ENCODE measurements at regions of chr15 and their contacts with region 1.

Region 1: DNA sequence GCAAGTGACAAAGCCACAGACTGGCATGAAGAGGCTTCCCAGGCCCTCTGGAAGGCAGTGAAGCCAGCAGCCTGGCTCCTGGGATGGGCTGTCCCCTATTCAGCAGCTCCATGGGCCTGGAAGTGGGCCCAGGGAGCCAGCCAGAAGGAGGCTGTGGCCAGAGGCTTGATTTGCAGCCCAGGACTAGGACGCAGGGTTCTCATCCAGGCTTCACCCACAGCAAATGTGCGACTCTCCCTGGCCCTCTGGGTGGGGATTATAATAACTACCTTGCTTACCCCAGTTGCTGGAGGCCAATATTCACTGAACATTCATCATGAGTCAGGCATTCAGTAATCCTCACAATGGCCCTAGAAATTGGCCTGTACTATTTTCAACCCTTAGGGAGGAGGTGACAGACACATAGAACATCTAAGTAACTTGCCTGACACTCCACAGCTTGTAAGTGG is 24.6 kb upstream of the SRP14 start:
- DNase-seq: no peak
- H3K4me3 ChIP-seq: no peak overlapping the region
- H3K27ac ChIP-seq: no peak overlapping the region
- H3K4me1 ChIP-seq: peaks cover 0 to 9% (median 0%) of the 10 kb centered on the region in 4 experiments; a peak in 3 of 7 replicates
- H3K27me3 ChIP-seq: peaks cover 0 to 2% (median 0%) of the 10 kb centered on the region in 4 experiments; a peak in 1 of 7 replicates
- CTCF ChIP-seq: no peak
- EP300 ChIP-seq: no peak
- POLR2A ChIP-seq: no peak
- RAD21 ChIP-seq: no peak

Region 2: GRCh38 chr15:39908186-39908585 is 155.4 kb before region 1 on chr15:
- CTCF ChIA-PET with region 1: no interaction called
- POLR2A ChIA-PET with region 1: no interaction called
- DNase-seq: no peak
- H3K4me3 ChIP-seq: no peak overlapping the region
- H3K27ac ChIP-seq: no peak overlapping the region
- H3K4me1 ChIP-seq: peaks cover 17 to 42% (median 40%) of the 10 kb centered on the region in 4 experiments
- H3K27me3 ChIP-seq: no peaks in the 10 kb centered on the region
- CTCF ChIP-seq: no peak
- EP300 ChIP-seq: no peak
- POLR2A ChIP-seq: no peak; a peak in 1 of 3 replicates
- RAD21 ChIP-seq: no peak

Region 3: GRCh38 chr15:40098489-40099261 is 35.1 kb after region 1 on chr15:
- CTCF ChIA-PET with region 1: interaction called, 65 read pairs
- POLR2A ChIA-PET with region 1: interaction called, 6 read pairs
- DNase-seq: no peak
- H3K4me3 ChIP-seq: no peak overlapping the region
- H3K27ac ChIP-seq: no peak overlapping the region
- H3K4me1 ChIP-seq: peaks cover 18 to 38% (median 29%) of the 10 kb centered on the region in 4 experiments
- H3K27me3 ChIP-seq: no peaks in the 10 kb centered on the region
- CTCF ChIP-seq: no peak
- EP300 ChIP-seq: no peak
- POLR2A ChIP-seq: no peak
- RAD21 ChIP-seq: no peak

Measured in H1 (cell line).